ENCODE measurements at regions of chr9 and their contacts with region 1.

Region 1: GRCh38 chr9:96854073-96854876 is at the start of gene ZNF782:
- DNase-seq: peak; percentile 92
- H3K4me3 Mint-ChIP-seq: peak within 1 kb of the TSS; percentile 100
- H3K27ac Mint-ChIP-seq: peak within 1 kb of the TSS; percentile 95
- H3K4me1 Mint-ChIP-seq: peaks cover 51% of the 10 kb centered on the region
- H3K27me3 Mint-ChIP-seq: peaks cover 5% of the 10 kb centered on the region
- total RNA-seq, gene ZNF782: 2.8 to 3.2 TPM

Region 2: DNA sequence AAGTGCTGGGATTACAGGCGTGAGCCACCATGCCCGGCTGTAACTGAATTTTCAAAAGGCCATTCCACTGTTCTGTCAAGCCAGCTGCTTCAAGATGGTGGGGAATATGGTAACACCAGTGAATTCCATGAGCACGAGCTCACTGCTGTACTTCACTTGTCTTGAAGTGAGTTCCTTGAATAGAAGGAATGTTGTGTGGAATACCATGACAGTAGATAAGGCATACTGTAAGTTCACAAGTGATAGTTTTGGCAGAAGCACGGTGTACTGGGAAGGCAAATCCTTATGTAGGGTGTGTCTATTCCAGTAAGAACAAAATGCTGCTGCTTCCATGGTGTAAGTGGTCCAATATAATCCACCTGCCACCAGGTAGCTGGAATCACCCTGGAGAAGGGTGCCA is 192.6 kb before region 1 on chr9:
- CTCF ChIA-PET with region 1: no interaction called
- POLR2A ChIA-PET with region 1: no interaction called
- intact Hi-C with region 1: no loop called
- DNase-seq: no peak
- H3K4me3 Mint-ChIP-seq: no peak overlapping the region
- H3K27ac Mint-ChIP-seq: no peak overlapping the region
- H3K4me1 Mint-ChIP-seq: no peaks in the 10 kb centered on the region
- H3K27me3 Mint-ChIP-seq: peaks cover 3% of the 10 kb centered on the region

Region 3: DNA sequence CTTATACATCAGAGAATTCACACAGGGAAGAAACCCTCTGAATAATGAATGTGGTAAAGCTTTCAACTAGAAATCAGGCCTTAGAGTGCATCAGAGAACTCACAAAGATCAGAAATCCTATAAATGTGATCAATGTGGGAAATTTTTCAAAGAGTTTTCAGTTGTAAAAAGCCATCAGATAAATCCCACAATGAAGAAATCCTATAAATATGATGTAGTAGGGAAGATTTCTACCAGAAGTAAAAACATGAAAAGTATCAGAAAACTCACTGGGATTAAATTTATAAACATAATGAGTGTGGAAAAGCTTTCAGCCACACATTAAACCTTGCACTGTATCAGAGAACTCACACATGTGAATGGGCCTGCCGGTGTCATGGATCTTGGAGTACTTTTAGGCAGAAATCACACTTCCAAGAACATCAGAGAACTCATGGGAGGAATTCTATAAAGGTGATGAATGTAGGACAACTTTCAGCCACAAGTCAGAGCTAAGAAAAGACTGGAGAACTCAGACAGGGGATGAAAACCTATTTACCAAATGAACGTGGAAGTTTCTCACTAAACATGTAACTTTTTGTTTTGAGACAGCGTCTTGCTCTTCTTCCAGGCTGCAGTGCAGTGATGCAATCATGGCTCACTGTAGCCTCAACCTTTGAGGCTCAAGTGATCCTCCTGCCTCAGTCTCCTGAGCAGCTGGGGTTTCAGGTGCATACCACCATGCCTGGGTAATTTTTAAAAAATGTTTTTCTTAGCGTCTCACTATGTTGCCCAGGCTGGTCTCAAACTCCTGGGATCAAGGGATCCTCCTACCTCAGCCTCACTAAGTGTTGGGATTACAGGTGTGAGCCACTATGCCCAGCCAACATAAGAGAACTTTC is 115.9 kb before region 1 on chr9:
- CTCF ChIA-PET with region 1: no interaction called
- POLR2A ChIA-PET with region 1: no interaction called
- intact Hi-C with region 1: no loop called
- DNase-seq: no peak
- H3K4me3 Mint-ChIP-seq: no peak overlapping the region
- H3K27ac Mint-ChIP-seq: no peak overlapping the region
- H3K4me1 Mint-ChIP-seq: no peaks in the 10 kb centered on the region
- H3K27me3 Mint-ChIP-seq: peaks cover 3% of the 10 kb centered on the region

Region 4: GRCh38 chr9:96758845-96759673 is 95.2 kb before region 1 on chr9:
- CTCF ChIA-PET with region 1: no interaction called
- POLR2A ChIA-PET with region 1: no interaction called
- intact Hi-C with region 1: no loop called
- DNase-seq: no peak
- H3K4me3 Mint-ChIP-seq: no peak overlapping the region
- H3K27ac Mint-ChIP-seq: no peak overlapping the region
- H3K4me1 Mint-ChIP-seq: no peaks in the 10 kb centered on the region
- H3K27me3 Mint-ChIP-seq: no peaks in the 10 kb centered on the region

Region 5: DNA sequence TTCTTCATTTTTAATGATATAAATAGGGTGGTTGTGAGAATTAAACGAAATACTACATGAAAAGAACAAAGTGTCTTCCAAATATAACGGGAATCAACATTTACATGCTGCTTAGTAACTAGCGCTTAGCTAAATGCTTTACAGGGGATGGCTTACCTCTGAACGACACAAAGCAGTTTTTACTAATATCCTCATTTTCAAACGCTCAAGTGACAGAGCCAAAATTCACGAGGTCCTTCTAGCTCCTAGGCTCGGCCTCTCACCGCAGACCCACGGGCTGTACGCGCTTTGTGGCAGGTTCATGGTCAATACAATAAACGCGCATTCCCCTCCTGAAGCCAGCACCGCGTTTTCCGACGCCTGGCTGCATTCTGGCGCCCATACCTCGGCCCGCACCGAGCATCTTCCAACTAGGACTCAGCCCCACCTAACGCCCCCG is 76.8 kb before region 1 on chr9:
- CTCF ChIA-PET with region 1: no interaction called
- POLR2A ChIA-PET with region 1: interaction called, 3 read pairs
- intact Hi-C with region 1: loop called (anchors 1 kb)
- DNase-seq: no peak
- H3K4me3 Mint-ChIP-seq: peak overlapping the region; percentile 100
- H3K27ac Mint-ChIP-seq: peak overlapping the region; percentile 88
- H3K4me1 Mint-ChIP-seq: peaks cover 28% of the 10 kb centered on the region
- H3K27me3 Mint-ChIP-seq: no peaks in the 10 kb centered on the region

Region 6: DNA sequence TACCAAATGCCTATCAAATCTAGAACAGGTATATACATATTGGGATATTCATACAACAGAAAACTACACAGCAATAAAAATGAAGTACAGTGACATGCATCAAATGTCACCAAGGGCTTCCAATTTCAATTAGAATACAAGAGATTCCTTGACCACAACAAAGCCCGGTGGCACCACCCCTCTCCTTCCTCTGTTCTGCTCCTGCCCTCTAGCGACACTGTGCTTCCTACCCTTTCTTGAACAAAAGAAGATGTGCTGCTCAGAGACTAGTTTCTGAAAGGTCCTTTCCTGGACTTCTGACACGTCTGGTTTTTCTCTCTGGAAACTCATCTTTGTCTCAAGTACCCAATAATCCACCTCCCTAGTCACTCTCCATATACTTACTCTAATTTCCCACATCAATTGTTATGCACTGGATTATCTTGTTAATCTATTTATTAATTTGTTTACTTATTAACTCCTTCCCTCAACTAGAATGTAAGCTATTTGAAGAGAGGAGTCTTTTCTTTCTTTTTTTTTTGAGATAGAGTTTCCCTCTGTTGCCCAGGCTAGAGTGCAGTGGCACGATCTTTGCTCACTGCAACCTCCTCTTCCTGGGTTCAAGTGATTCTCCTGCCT is 255.0 kb after region 1 on chr9:
- CTCF ChIA-PET with region 1: interaction called, 17 read pairs
- POLR2A ChIA-PET with region 1: no interaction called
- intact Hi-C with region 1: loop called (anchors 1 kb)
- DNase-seq: peak; percentile 68
- H3K4me3 Mint-ChIP-seq: no peak overlapping the region
- H3K27ac Mint-ChIP-seq: no peak overlapping the region
- H3K4me1 Mint-ChIP-seq: no peaks in the 10 kb centered on the region
- H3K27me3 Mint-ChIP-seq: peaks cover 3% of the 10 kb centered on the region

Region 7: GRCh38 chr9:97237951-97238851 is 383.9 kb after region 1 on chr9:
- CTCF ChIA-PET with region 1: interaction called, 8 read pairs
- POLR2A ChIA-PET with region 1: interaction called, 4 read pairs
- intact Hi-C with region 1: loop called (anchors 5 kb)
- DNase-seq: peak; percentile 88
- H3K4me3 Mint-ChIP-seq: peak overlapping the region; percentile 95
- H3K27ac Mint-ChIP-seq: peak overlapping the region; percentile 91
- H3K4me1 Mint-ChIP-seq: peaks cover 16% of the 10 kb centered on the region
- H3K27me3 Mint-ChIP-seq: no peaks in the 10 kb centered on the region

Region 8: GRCh38 chr9:97398999-97399758 is 544.9 kb after region 1 on chr9:
- CTCF ChIA-PET with region 1: interaction called, 41 read pairs
- POLR2A ChIA-PET with region 1: no interaction called
- intact Hi-C with region 1: loop called (anchors 1 kb)
- DNase-seq: peak; percentile 80
- H3K4me3 Mint-ChIP-seq: no peak overlapping the region
- H3K27ac Mint-ChIP-seq: no peak overlapping the region
- H3K4me1 Mint-ChIP-seq: peaks cover 17% of the 10 kb centered on the region
- H3K27me3 Mint-ChIP-seq: peaks cover 5% of the 10 kb centered on the region